CD8-positive, alpha-beta T cell (primary cell): ENCODE measurements at regions of chr9 and their contacts with region 1.

Region 1: DNA sequence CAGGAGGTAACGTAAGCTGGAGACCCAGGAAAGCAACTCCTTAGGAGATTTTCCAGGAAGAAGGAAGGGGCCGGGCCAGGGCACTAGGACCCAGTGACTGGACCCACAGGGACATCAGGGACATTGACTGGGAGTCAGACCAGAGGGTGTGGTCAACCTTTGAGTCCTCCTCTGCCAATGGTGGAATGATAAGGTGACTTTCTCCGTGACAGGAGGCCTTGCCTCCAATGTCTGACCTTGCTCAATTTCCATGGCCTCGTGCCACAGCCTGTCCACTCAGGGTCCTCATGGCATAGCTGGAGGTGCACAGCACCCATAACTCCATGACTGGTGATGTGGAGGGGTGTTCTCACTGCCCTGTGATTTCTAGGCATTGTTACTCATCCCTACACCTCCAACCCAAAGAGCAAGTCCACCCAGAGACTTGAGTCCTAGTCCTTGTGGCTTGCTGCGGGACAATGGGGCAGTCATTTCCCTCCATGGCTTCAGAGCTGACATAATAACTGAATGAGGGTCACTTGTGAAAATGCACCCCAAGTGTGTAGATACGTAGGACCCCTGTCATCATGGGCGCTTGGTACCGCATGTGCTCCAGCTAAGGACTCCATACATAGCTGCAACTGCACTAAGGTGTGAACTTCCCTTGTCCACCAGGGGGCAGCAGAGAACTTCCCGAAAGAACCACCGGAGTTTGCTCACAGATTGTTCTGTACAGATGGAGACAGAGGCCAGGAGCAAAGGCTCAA is 4.1 kb upstream of the AMBP start:
- DNase-seq: peak; percentile 59 to 85 (median 77)
- ATAC-seq: peak; percentile 54
- H3K4me3 ChIP-seq: no peak overlapping the region
- H3K4me3 Mint-ChIP-seq: no peak overlapping the region
- H3K27ac ChIP-seq: no peak overlapping the region
- H3K27ac Mint-ChIP-seq: no peak overlapping the region
- H3K4me1 ChIP-seq: no peaks in the 10 kb centered on the region
- H3K4me1 Mint-ChIP-seq: no peaks in the 10 kb centered on the region
- H3K27me3 ChIP-seq: no peaks in the 10 kb centered on the region
- H3K27me3 Mint-ChIP-seq: peaks cover under 1% of the 10 kb centered on the region
- CTCF ChIP-seq: peak; percentile 87

Region 2: DNA sequence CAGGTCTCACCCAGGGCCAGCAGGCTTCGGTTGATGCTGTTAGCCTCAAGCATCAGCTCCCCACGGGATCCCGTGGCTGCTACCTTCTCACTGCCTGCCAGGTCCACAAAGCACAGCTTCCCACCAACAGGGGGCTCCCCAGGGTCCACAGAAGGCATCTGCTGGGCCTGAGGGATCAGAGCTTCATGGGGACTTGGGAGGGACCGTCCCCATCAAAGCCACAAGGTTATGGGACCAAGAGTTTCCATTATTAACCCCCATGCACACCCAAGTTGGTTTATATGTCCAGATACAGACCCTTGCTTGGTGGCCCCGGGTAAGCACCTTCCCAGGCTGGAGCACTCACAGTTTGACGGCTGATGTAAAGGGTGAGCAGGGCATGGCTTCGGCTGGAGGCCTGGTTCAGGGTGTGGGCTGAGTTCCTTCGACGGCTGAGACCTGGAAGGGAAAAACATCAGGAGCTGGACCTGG is 13.9 kb after region 1 on chr9:
- CTCF ChIA-PET with region 1: interaction called, 34 read pairs
- POLR2A ChIA-PET with region 1: no interaction called
- intact Hi-C with region 1: no loop called
- DNase-seq: no peak
- ATAC-seq: no peak
- H3K4me3 ChIP-seq: no peak overlapping the region
- H3K4me3 Mint-ChIP-seq: no peak overlapping the region
- H3K27ac ChIP-seq: no peak overlapping the region
- H3K27ac Mint-ChIP-seq: no peak overlapping the region
- H3K4me1 ChIP-seq: peaks cover 8% of the 10 kb centered on the region
- H3K4me1 Mint-ChIP-seq: peaks cover 13% of the 10 kb centered on the region
- H3K27me3 ChIP-seq: peaks cover 10 to 11% of the 10 kb centered on the region in 2 experiments
- H3K27me3 Mint-ChIP-seq: peaks cover 40% of the 10 kb centered on the region
- CTCF ChIP-seq: no peak

Region 3: GRCh38 chr9:114108016-114108833 is 26.0 kb after region 1 on chr9:
- CTCF ChIA-PET with region 1: interaction called, 10 read pairs
- POLR2A ChIA-PET with region 1: no interaction called
- intact Hi-C with region 1: no loop called
- DNase-seq: peak in 8 of 9 experiments; percentile 8 to 62 (median 40)
- ATAC-seq: peak; percentile 48
- H3K4me3 ChIP-seq: no peak overlapping the region
- H3K4me3 Mint-ChIP-seq: no peak overlapping the region
- H3K27ac ChIP-seq: no peak overlapping the region
- H3K27ac Mint-ChIP-seq: no peak overlapping the region
- H3K4me1 ChIP-seq: no peaks in the 10 kb centered on the region
- H3K4me1 Mint-ChIP-seq: no peaks in the 10 kb centered on the region
- H3K27me3 ChIP-seq: peaks cover 0 to under 1% of the 10 kb centered on the region in 2 experiments
- H3K27me3 Mint-ChIP-seq: peaks cover 10% of the 10 kb centered on the region
- CTCF ChIP-seq: peak; percentile 58

Region 4: DNA sequence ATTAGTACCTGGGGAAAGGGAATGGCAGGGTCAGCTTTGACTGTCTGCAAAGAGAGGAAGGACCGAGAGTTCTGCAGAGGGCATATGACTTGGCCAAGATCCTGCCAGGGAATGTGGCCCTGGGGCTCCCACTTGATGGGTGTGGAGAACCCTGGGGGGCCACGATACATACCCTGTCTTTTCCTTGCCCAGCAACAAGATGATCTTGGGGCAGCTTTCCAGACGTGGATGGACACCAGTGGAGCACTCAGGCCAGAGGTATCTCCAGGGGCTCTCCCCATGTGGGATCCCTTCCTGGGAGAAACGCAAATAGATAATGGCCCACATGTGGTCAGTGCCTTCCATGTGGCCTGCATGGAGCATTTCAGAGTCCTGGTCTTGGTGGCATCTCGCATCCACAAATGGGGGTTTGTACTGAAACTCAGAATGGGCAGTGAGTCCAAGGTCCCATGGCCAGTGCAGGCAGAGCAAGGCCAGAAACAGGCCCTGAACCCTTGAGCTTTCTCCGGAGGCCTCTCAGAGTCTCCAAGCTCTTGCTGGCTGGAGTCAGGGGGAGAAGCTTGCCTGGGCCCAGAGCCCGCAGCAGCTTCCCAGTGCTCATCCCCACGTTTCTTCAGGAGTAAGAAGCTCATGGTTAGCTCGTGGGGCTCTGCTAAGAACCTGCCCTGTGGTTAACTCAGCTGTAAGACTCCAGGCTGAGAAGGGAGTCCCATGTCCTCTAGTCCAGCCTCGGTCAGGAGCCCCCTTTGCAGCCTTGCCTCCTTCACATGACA is 222.4 kb after region 1 on chr9:
- CTCF ChIA-PET with region 1: no interaction called
- POLR2A ChIA-PET with region 1: no interaction called
- intact Hi-C with region 1: loop called in 1 of 2 experiments (anchors 1 kb)
- DNase-seq: peak in 1 of 9 experiments; percentile 29
- ATAC-seq: no peak
- H3K4me3 ChIP-seq: no peak overlapping the region
- H3K4me3 Mint-ChIP-seq: no peak overlapping the region
- H3K27ac ChIP-seq: no peak overlapping the region
- H3K27ac Mint-ChIP-seq: no peak overlapping the region
- H3K4me1 ChIP-seq: no peaks in the 10 kb centered on the region
- H3K4me1 Mint-ChIP-seq: peaks cover 6% of the 10 kb centered on the region
- H3K27me3 ChIP-seq: no peaks in the 10 kb centered on the region
- H3K27me3 Mint-ChIP-seq: peaks cover 6% of the 10 kb centered on the region
- CTCF ChIP-seq: no peak